ENCODE measurements at regions of chr3 and their contacts with region 1.

Region 1: DNA sequence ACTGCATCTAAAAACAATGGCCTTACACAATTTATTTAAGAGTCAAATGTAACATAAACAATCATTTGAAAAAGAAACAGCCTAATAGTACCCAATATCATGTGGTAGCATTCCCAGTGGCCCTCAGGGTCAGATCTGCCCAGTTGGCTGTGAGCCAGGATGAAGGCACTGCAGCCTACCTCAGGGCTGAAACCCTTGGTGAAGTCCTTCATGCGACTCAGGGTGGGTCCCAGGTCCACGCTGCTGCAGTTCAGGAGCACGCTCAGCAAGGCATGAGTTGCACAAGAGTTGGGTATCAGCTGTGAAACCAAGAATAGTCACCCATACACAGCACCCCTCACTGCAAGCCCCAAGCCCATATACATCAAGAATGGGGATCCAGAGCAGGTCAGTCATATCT is 37.1 kb downstream of the SEMA3G start:
- DNase-seq: no peak
- ATAC-seq: no peak
- H3K4me3 ChIP-seq: no peak overlapping the region
- H3K27ac ChIP-seq: no peak overlapping the region
- H3K4me1 ChIP-seq: peaks cover 16% of the 10 kb centered on the region
- H3K27me3 ChIP-seq: no peaks in the 10 kb centered on the region
- CTCF ChIP-seq: no peak
- EP300 ChIP-seq: no peak
- POLR2A ChIP-seq: no peak
- RAD21 ChIP-seq: no peak

Region 2: GRCh38 chr3:51908026-51908425 is 499.8 kb before region 1 on chr3:
- CTCF ChIA-PET with region 1: no interaction called
- POLR2A ChIA-PET with region 1: no interaction called
- RAD21 ChIA-PET with region 1: no interaction called
- SMC1A ChIA-PET with region 1: no interaction called
- in situ Hi-C with region 1: no loop called
- intact Hi-C with region 1: no loop called
- DNase-seq: no peak
- ATAC-seq: no peak
- H3K4me3 ChIP-seq: no peak overlapping the region
- H3K27ac ChIP-seq: no peak overlapping the region
- H3K4me1 ChIP-seq: no peaks in the 10 kb centered on the region
- H3K27me3 ChIP-seq: no peaks in the 10 kb centered on the region
- CTCF ChIP-seq: no peak
- EP300 ChIP-seq: no peak
- POLR2A ChIP-seq: no peak
- RAD21 ChIP-seq: no peak

Region 3: DNA sequence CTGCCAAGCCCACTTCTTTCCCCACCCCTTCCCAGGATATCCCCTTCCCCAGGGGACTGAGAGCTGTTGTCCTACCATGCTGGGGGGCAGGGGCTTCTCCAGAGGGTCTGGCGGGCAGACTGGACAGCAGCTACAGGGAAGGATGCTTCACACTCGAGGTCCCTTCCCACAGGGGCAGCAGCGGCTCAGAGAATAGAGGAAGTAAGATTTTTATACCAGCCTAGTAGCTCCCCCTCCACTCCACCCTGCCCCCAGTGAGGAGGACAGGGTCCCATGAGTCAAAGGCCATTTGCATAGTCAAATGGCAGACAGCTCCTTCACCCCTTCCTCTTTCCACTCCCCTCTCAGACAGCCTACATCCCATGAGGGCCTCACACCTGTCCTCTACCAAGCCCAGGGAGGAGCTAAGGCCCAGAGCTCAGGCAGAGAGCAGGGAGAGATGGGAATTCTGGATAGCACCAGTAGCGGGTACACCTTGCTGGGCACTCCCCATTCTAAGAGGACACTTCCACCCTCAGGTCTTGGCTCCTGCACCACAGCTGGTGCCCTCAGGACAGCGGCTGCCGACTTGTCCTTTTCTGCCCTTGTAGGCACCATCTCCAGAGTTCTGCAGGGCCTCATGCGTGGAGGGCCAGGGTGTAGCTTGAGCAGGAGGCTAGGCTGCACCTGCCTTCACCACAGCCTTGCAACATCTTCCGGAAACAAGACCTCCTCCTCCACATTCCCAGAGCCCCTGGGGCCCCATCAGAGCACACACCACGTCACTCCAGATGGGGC is 182.1 kb before region 1 on chr3 and contains the start of gene TLR9:
- CTCF ChIA-PET with region 1: interaction called, 12 read pairs
- POLR2A ChIA-PET with region 1: no interaction called
- RAD21 ChIA-PET with region 1: interaction called, 4 read pairs
- SMC1A ChIA-PET with region 1: no interaction called
- in situ Hi-C with region 1: no loop called
- intact Hi-C with region 1: no loop called
- DNase-seq: peak; percentile 71
- ATAC-seq: peak; percentile 91
- H3K4me3 ChIP-seq: peak within 1 kb of the TSS; percentile 60
- H3K27ac ChIP-seq: peak within 1 kb of the TSS; percentile 76
- H3K4me1 ChIP-seq: peaks cover 22% of the 10 kb centered on the region
- H3K27me3 ChIP-seq: no peaks in the 10 kb centered on the region
- CTCF ChIP-seq: no peak
- EP300 ChIP-seq: peak in 1 of 2 experiments; percentile 51; a peak in 1 of 4 replicates
- POLR2A ChIP-seq: peak; percentile 80
- RAD21 ChIP-seq: no peak
- polyA plus RNA-seq, gene TLR9: 0.10 TPM in 1 of 2 experiments, not detected in the other

Region 4: DNA sequence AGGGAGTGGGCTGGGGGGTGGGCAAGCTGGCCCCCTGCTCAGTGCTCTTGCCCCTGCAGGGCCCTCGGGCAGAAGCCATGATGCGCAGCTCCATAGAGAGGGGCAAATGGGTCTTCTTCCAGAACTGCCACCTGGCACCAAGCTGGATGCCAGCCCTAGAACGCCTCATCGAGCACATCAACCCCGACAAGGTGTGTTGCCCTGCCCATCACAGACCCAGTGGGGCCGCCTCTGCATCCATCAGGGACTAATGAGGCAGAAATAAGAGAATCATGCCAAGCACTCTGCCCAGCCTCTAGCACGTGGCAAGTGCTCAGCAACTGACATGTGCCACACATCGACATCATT is 12.3 kb before region 1 on chr3:
- CTCF ChIA-PET with region 1: no interaction called
- POLR2A ChIA-PET with region 1: no interaction called
- RAD21 ChIA-PET with region 1: no interaction called
- SMC1A ChIA-PET with region 1: no interaction called
- in situ Hi-C with region 1: no loop called
- intact Hi-C with region 1: no loop called
- DNase-seq: no peak
- ATAC-seq: no peak
- H3K4me3 ChIP-seq: no peak overlapping the region
- H3K27ac ChIP-seq: no peak overlapping the region
- H3K4me1 ChIP-seq: no peaks in the 10 kb centered on the region
- H3K27me3 ChIP-seq: no peaks in the 10 kb centered on the region
- CTCF ChIP-seq: no peak
- EP300 ChIP-seq: no peak
- POLR2A ChIP-seq: no peak; the same call in 1 of the 2 replicates
- RAD21 ChIP-seq: no peak

Region 5: GRCh38 chr3:52420388-52420787 is 12.6 kb after region 1 on chr3:
- CTCF ChIA-PET with region 1: interaction called, 57 read pairs
- POLR2A ChIA-PET with region 1: no interaction called
- RAD21 ChIA-PET with region 1: no interaction called
- SMC1A ChIA-PET with region 1: interaction called, 11 read pairs
- in situ Hi-C with region 1: no loop called
- intact Hi-C with region 1: no loop called
- DNase-seq: no peak
- ATAC-seq: no peak
- H3K4me3 ChIP-seq: no peak overlapping the region
- H3K27ac ChIP-seq: no peak overlapping the region
- H3K4me1 ChIP-seq: no peaks in the 10 kb centered on the region
- H3K27me3 ChIP-seq: no peaks in the 10 kb centered on the region; a peak in 1 of 4 replicates
- CTCF ChIP-seq: no peak
- EP300 ChIP-seq: no peak
- POLR2A ChIP-seq: no peak
- RAD21 ChIP-seq: no peak

Region 6: GRCh38 chr3:52428151-52429005 is 20.6 kb after region 1 on chr3:
- CTCF ChIA-PET with region 1: interaction called, 57 read pairs
- POLR2A ChIA-PET with region 1: interaction called, 3 read pairs
- RAD21 ChIA-PET with region 1: no interaction called
- SMC1A ChIA-PET with region 1: interaction called, 11 read pairs
- in situ Hi-C with region 1: no loop called
- intact Hi-C with region 1: no loop called
- DNase-seq: no peak
- ATAC-seq: peak; percentile 95
- H3K4me3 ChIP-seq: no peak overlapping the region
- H3K27ac ChIP-seq: no peak overlapping the region
- H3K4me1 ChIP-seq: no peaks in the 10 kb centered on the region
- H3K27me3 ChIP-seq: no peaks in the 10 kb centered on the region
- CTCF ChIP-seq: peak; percentile 72 to 78 (median 77)
- EP300 ChIP-seq: no peak
- POLR2A ChIP-seq: no peak
- RAD21 ChIP-seq: peak; percentile 74

Region 7: DNA sequence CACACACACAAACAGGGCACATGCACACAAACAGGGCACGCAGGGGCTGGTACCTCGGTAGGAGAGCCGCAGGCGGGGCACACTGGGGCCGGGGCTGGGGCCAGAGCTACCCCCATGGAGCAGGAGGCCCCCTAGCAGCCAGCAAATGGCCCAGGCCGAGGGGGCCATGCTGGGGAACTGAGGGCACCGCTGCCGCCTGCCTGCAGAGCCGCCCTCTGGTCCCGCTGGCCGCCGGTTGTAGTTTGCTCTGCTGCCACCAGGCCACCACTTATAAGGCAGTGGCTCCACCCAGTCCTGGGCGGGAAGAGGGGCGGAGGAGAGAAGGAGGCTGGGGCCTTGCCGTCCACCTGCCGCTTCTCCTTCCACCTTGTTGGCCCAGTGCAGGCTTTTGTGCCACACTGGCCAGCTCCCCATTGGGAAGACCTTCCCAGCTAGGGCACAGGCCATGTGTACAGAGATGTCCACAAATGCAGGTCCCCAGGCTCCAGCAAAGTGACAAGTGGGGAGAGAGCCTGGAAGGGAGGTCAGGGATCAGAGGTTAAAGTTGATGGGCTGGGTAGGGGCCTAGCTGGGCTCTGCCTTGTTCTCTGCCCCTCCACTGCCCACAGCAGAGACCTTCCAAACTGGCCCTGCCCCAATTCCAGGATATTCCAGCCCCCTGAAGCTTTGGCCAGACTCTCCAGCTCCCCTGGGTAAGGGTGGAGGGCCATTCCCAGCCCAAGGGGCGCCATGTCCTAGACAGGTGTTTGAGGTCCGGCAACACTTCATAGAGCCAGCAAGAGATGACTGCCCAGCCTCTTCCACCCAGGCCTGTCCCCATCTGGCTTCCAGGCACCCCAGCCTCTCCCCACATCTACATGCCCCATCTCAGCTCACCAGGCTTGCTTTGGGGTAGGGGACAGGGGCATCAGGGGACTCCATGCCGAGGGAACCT is 37.3 kb after region 1 on chr3 and contains the start of gene SEMA3G:
- CTCF ChIA-PET with region 1: interaction called, 6 read pairs
- POLR2A ChIA-PET with region 1: interaction called, 4 read pairs
- RAD21 ChIA-PET with region 1: interaction called, 63 read pairs
- SMC1A ChIA-PET with region 1: no interaction called
- in situ Hi-C with region 1: no loop called
- intact Hi-C with region 1: loop called (anchors 1 kb)
- DNase-seq: no peak
- ATAC-seq: peak; percentile 98
- H3K4me3 ChIP-seq: no peak within 1 kb of the TSS
- H3K27ac ChIP-seq: no peak within 1 kb of the TSS
- H3K4me1 ChIP-seq: no peaks in the 10 kb centered on the region
- H3K27me3 ChIP-seq: no peaks in the 10 kb centered on the region
- CTCF ChIP-seq: peak; percentile 30 to 73 (median 52)
- EP300 ChIP-seq: no peak
- POLR2A ChIP-seq: peak; percentile 71
- RAD21 ChIP-seq: 0 out of 2 replicates have a peak, but pooled peaks have one; percentile 14
- polyA plus RNA-seq, gene SEMA3G: not detected

Region 8: DNA sequence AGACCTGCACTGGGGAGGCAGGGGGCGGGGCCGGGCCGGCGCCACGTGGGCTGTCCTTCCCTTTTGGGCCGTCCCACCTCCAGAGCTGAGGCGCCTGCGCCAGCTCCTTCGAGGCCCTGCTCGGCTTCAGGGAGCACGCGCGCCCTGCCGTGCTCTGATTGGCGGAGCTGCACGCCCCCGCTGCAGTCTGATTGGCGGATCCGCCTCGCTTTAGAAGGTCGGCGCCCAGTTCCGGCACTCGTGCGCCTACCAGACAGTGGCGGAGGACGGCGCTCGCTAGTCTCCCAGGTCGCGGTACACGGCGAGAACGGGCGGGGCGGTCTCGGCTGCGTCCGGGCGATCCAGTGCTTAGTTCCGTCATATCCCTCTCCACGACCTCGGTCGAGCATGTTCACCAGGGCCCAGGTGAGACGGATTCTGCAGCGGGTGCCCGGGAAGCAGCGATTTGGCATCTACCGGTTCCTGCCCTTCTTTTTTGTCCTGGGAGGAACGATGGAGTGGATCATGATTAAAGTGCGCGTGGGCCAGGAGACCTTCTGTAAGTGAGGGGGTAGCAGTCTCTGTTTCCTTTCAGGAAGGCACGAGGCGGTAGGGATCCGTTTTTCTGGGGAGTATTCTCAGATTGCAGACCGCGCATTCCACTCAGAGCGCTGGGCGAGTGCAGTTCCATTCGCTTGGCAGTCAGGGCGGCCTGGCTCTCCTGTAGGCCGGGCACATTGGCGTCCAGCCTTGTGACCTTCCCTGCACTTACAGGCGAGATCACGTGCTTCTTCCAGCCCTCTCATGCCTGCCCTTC is 128.8 kb after region 1 on chr3 and contains the start of gene UQCC5:
- CTCF ChIA-PET with region 1: no interaction called
- POLR2A ChIA-PET with region 1: no interaction called
- RAD21 ChIA-PET with region 1: interaction called, 10 read pairs
- SMC1A ChIA-PET with region 1: no interaction called
- in situ Hi-C with region 1: no loop called
- intact Hi-C with region 1: no loop called
- DNase-seq: peak; percentile 95
- ATAC-seq: peak; percentile 91
- H3K4me3 ChIP-seq: peak within 1 kb of the TSS; percentile 95
- H3K27ac ChIP-seq: peak within 1 kb of the TSS; percentile 84
- H3K4me1 ChIP-seq: peaks cover 15% of the 10 kb centered on the region
- H3K27me3 ChIP-seq: no peaks in the 10 kb centered on the region
- CTCF ChIP-seq: peak in 1 of 3 experiments; percentile 22; a peak in 1 of 6 replicates
- EP300 ChIP-seq: no peak
- POLR2A ChIP-seq: peak; percentile 100
- RAD21 ChIP-seq: no peak
- polyA plus RNA-seq, gene UQCC5: 38.4 to 56.8 TPM